ENCODE measurements at regions of chr2 and their contacts with region 1.

Region 1: GRCh38 chr2:145059914-145060313 is 540.0 kb upstream of the ZEB2 start:
- DNase-seq: no peak
- H3K4me3 ChIP-seq: no peak overlapping the region
- H3K27ac ChIP-seq: no peak overlapping the region
- H3K4me1 ChIP-seq: peaks cover 0 to 10% (median 4%) of the 10 kb centered on the region in 4 donors
- H3K27me3 ChIP-seq: no peaks in the 10 kb centered on the region
- CTCF ChIP-seq: no peak

Region 2: GRCh38 chr2:145007093-145007959 is 52.6 kb before region 1 on chr2:
- intact Hi-C with region 1: loop called (anchors 10 kb)
- DNase-seq: peak; percentile 61 to 79
- H3K4me3 ChIP-seq: peak overlapping the region; percentile 27 to 36
- H3K27ac ChIP-seq: peak overlapping the region; percentile 77 to 80
- H3K4me1 ChIP-seq: peaks cover 0 to 26% (median 13%) of the 10 kb centered on the region in 4 donors
- H3K27me3 ChIP-seq: no peaks in the 10 kb centered on the region
- CTCF ChIP-seq: no peak

Region 3: DNA sequence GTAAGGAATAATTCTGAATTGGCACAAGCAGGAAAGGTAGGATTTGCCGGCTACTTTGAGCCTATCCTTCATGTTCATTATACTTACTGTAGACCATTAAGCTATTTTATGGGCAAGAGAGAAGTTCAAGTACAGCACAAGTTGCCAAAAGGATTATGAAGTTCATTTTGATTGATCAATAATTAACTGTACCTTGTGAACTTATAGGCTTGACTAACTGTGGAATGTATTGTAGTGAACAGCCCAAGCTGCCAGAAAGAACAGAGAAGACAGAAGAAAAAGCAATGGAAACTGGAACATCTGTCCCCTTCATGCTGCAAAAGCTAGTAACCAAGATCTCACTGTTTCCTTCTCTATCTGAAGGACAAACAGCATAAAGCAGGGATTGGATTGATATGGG is 270.1 kb after region 1 on chr2:
- intact Hi-C with region 1: no loop called
- DNase-seq: no peak
- H3K4me3 ChIP-seq: no peak overlapping the region
- H3K27ac ChIP-seq: no peak overlapping the region
- H3K4me1 ChIP-seq: no peaks in the 10 kb centered on the region
- H3K27me3 ChIP-seq: no peaks in the 10 kb centered on the region
- CTCF ChIP-seq: no peak

Region 4: GRCh38 chr2:145360129-145360790 is 300.3 kb after region 1 on chr2:
- intact Hi-C with region 1: no loop called
- DNase-seq: no peak
- H3K4me3 ChIP-seq: no peak overlapping the region
- H3K27ac ChIP-seq: no peak overlapping the region
- H3K4me1 ChIP-seq: no peaks in the 10 kb centered on the region
- H3K27me3 ChIP-seq: no peaks in the 10 kb centered on the region
- CTCF ChIP-seq: no peak

Measured in tibial artery (tissue), 4 donors.